AG04450 (cell line): ENCODE measurements at regions of chr5 and their contacts with region 1.

Region 1: GRCh38 chr5:36264202-36264760 is 22.6 kb upstream of the NADK2 start:
- DNase-seq: no peak
- H3K4me3 ChIP-seq: no peak overlapping the region
- H3K27ac ChIP-seq: no peak overlapping the region
- H3K27me3 ChIP-seq: no peaks in the 10 kb centered on the region
- CTCF ChIP-seq: no peak

Region 2: GRCh38 chr5:36125868-36126267 is 138.4 kb before region 1 on chr5:
- CTCF ChIA-PET with region 1: no interaction called
- POLR2A ChIA-PET with region 1: no interaction called
- DNase-seq: no peak
- H3K4me3 ChIP-seq: no peak overlapping the region
- H3K27ac ChIP-seq: no peak overlapping the region
- H3K27me3 ChIP-seq: no peaks in the 10 kb centered on the region
- CTCF ChIP-seq: no peak

Region 3: DNA sequence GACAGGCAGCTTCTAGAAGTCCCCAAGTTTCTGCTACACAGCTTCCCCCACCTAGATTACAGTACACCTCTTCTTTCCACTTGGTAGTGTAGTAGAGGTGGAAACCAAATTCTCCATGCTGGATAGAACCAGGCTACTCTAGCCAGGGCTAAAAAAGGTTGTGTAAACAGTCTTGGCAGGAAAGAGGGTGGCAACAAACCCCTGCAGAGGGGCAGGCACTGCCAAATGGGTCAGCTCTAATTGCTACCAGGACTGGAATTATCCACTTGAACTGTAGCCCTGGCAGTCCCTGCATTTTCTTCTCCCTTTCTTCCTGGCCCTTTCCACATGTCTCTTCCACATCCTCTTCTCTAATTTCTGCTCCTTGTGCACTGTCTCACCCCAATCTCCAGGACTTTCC is 12.6 kb after region 1 on chr5:
- CTCF ChIA-PET with region 1: interaction called, 23 read pairs
- POLR2A ChIA-PET with region 1: no interaction called
- DNase-seq: no peak
- H3K4me3 ChIP-seq: no peak overlapping the region
- H3K27ac ChIP-seq: no peak overlapping the region
- H3K27me3 ChIP-seq: peaks cover 6% of the 10 kb centered on the region
- CTCF ChIP-seq: no peak

Region 4: GRCh38 chr5:36403632-36404311 is 139.5 kb after region 1 on chr5:
- CTCF ChIA-PET with region 1: interaction called, 10 read pairs
- POLR2A ChIA-PET with region 1: no interaction called
- DNase-seq: peak; percentile 11
- H3K4me3 ChIP-seq: no peak overlapping the region
- H3K27ac ChIP-seq: peak overlapping the region; percentile 31
- H3K27me3 ChIP-seq: no peaks in the 10 kb centered on the region
- CTCF ChIP-seq: no peak

Region 5: GRCh38 chr5:36444582-36445418 is 180.5 kb after region 1 on chr5:
- CTCF ChIA-PET with region 1: no interaction called
- POLR2A ChIA-PET with region 1: no interaction called
- DNase-seq: no peak
- H3K4me3 ChIP-seq: no peak overlapping the region
- H3K27ac ChIP-seq: no peak overlapping the region
- H3K27me3 ChIP-seq: peaks cover 3% of the 10 kb centered on the region
- CTCF ChIP-seq: no peak

Region 6: DNA sequence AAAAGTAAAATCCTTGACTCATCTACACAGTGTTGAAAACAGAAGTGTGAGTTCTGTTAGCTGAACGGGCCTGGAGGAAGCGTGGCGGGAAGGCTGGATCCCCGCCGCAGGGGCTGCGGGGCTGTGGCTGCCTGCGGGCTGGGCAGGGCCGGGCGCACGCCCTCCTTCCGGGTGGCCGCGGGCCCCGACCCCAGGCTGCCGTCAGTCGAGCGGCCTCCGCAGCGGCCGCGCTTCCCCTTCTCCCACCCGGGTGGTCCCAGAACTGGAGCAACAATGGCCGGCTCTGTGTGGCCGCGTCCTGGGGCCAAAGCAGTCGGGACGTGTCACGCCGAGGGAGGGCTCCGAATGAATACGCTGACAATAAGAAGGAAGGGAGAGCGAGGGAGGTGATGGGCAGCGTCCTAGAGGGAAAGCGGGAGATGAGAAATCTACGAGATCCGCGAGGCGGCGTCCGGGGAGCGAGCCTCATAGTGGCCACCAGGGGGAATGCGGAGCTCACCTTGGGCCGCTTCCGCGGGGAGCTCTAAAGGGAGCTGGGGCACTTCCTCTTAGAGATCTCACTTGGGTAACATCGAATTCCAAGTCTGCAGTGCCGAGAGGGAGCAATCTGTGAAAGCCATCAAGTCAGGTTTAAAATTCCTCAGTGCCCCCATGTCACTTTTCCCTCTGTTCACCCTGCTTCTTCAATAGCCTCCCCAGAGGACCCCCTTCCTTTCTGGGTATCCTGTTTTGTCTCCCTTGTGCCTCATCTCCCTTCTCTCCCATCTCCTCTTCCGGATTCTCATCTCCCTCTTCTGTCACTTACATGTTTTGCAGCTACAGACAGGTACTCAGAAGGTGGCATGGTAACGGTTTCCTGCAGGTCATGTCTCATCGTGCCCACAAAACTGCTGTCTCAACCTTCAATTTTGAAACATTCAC is 426.0 kb after region 1 on chr5:
- CTCF ChIA-PET with region 1: interaction called, 34 read pairs
- POLR2A ChIA-PET with region 1: no interaction called
- DNase-seq: peak; percentile 33
- H3K4me3 ChIP-seq: peak overlapping the region; percentile 64
- H3K27ac ChIP-seq: no peak overlapping the region
- H3K27me3 ChIP-seq: no peaks in the 10 kb centered on the region
- CTCF ChIP-seq: peak; percentile 97